ENCODE measurements at regions of chr12 and their contacts with region 1.

Region 1: DNA sequence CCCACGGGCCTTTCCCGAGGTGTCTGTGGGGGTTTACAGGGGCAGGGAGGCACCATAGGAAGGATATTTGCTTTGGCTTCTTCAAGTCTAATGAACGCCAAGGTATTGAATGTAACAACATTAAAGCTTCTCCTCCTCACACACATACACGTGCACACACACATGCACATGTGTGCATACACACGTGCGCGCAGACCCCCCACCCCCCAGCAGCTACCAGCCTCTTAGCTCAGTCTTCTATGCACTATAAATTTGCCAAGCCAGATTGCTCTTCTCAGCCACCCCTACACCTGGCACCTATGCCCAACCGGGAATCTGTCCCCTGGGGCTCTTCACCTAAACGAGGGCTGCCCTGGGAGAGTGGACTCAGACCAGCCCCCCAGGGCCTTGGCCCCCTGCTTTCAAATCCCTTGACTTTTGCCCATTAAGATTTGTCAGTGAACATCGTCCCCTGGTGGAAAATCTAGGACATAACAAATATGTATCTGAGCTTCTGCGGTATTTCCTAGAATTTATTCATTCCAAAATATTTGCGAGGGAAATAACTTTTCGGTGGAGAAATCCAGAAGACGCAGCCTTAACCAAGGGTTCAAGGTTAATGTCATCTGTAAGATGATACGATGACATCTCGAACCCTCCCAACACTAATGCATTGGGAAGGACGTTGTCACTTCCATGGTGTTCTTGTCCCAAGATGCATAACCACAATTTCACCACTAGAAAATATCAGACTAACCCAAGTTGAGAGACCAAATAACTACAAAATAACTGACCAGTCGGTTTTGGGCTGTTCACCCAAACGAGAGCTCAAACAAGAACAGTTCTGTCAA is 330.4 kb downstream of the MED13L start:
- DNase-seq: peak; percentile 8
- ATAC-seq: no peak
- H3K4me3 ChIP-seq: no peak overlapping the region
- H3K27ac ChIP-seq: no peak overlapping the region
- H3K4me1 ChIP-seq: peaks cover 26% of the 10 kb centered on the region
- H3K27me3 ChIP-seq: no peaks in the 10 kb centered on the region
- CTCF ChIP-seq: peak; percentile 74
- EP300 ChIP-seq: no peak
- POLR2A ChIP-seq: no peak
- RAD21 ChIP-seq: peak; percentile 78

Region 2: GRCh38 chr12:115598871-115599811 is 347.9 kb before region 1 on chr12:
- CTCF ChIA-PET with region 1: no interaction called
- POLR2A ChIA-PET with region 1: no interaction called
- in situ Hi-C with region 1: no loop called
- intact Hi-C with region 1: no loop called
- DNase-seq: no peak
- ATAC-seq: no peak
- H3K4me3 ChIP-seq: no peak overlapping the region
- H3K27ac ChIP-seq: no peak overlapping the region
- H3K4me1 ChIP-seq: no peaks in the 10 kb centered on the region
- H3K27me3 ChIP-seq: peaks cover 0 to 18% of the 10 kb centered on the region in 2 experiments; a peak in 4 of 5 replicates
- CTCF ChIP-seq: no peak
- EP300 ChIP-seq: no peak
- POLR2A ChIP-seq: no peak
- RAD21 ChIP-seq: no peak

Region 3: DNA sequence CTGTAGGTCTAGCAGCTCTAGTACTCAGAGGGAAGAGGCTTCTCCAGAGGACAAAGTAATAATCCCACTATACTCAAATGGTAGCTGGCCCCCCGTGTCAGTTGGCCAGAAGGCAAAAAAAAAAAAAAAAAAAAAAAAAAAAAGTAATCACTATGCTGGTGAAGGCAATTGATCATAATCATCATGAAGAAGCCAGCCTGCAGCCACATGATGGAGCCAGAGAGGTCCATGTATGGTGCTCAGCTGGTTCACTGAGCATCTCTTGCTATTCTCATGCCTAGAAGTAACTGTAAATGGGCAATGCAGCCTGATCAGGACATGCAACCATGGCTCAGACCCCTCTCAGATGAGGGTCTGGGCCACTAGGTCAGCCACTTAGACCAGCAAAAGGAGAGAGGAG is 48.4 kb before region 1 on chr12:
- CTCF ChIA-PET with region 1: no interaction called
- POLR2A ChIA-PET with region 1: no interaction called
- in situ Hi-C with region 1: no loop called
- intact Hi-C with region 1: loop called (anchors 1 kb)
- DNase-seq: no peak
- ATAC-seq: peak; percentile 54
- H3K4me3 ChIP-seq: no peak overlapping the region
- H3K27ac ChIP-seq: no peak overlapping the region
- H3K4me1 ChIP-seq: no peaks in the 10 kb centered on the region
- H3K27me3 ChIP-seq: no peaks in the 10 kb centered on the region
- CTCF ChIP-seq: peak; percentile 19; the same call in 1 of the 2 replicates
- EP300 ChIP-seq: no peak
- POLR2A ChIP-seq: no peak
- RAD21 ChIP-seq: no peak

Region 4: DNA sequence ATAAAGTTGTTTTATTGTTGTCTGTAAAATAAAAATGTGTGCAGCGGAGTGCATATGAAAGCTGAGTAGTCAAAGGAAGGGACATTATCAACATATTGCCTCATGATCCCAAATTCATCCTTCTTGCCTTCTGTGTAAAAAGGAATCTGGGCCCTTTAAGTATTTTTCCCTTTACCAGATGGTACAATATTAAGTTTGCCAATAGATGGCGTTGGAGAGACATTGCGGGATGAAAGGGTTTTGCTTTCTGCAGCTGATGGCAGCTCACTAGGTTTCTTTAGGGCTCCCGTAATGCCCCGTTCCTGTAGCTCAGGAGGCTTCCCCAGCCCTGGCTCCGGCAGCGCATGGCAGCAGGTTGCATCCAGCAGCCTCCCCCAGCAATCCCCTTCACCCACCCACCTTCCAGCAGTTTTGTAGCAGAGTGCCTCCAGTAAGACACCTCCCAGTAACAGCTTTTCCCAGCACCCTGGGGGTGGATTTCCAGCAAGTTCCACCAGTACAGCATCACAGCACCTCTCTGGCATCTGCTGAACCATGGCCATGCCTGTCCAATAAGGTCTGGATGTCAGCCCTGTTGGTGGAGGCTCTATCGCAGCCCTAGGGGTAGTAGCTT is 24.0 kb before region 1 on chr12:
- CTCF ChIA-PET with region 1: interaction called, 10 read pairs
- POLR2A ChIA-PET with region 1: interaction called, 4 read pairs
- in situ Hi-C with region 1: no loop called
- intact Hi-C with region 1: loop called (anchors 1 kb)
- DNase-seq: peak; percentile 49
- ATAC-seq: peak; percentile 66
- H3K4me3 ChIP-seq: no peak overlapping the region
- H3K27ac ChIP-seq: no peak overlapping the region
- H3K4me1 ChIP-seq: peaks cover 8% of the 10 kb centered on the region
- H3K27me3 ChIP-seq: peaks cover 0 to 15% of the 10 kb centered on the region in 2 experiments; a peak in 1 of 5 replicates
- CTCF ChIP-seq: peak; percentile 80
- EP300 ChIP-seq: no peak
- POLR2A ChIP-seq: no peak
- RAD21 ChIP-seq: peak; percentile 57; the same call in 1 of the 2 replicates

Region 5: DNA sequence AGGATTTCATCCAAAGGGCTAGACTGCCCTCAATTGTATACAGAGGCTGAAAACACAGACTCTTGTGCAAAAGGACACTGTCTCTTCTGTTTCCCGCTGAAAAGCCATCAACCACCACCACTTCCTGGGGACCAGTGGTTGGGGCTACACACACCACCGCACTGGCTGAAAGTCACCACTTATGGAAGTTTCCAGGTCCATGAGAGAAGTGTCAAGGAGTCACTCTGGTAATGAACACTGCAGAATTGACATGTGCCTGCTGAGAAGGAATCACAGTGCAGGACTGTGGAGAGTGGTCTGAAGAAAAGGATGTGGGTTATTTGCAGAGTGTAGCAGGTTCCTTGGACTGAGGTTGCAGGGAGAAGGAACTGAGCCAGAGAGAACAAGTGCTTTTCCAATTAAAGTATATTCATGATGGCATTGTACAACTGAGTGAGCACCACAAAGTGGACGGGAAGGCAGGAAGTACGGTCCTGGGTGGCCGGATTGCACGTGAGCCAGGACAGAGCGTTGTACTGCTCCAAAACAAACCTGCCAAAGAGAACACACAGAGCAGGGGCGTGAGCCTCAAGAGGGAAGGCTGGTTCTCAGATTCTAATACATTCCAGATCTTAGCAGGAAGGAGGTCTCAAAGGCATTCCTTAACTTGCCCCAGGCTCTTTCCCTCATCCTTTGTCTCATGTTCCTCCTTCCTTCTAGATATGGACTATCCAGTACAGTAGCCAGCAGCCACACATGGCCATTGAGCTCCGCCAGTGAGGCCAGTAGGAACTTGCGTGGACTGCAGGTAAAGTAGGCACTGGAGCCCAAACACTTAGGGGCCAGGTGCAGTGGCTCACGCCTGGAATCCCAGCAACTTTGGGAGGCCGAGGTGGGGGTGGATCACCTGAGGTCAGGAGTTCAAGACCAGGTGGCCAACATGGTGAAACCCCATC is 14.1 kb after region 1 on chr12:
- CTCF ChIA-PET with region 1: no interaction called
- POLR2A ChIA-PET with region 1: no interaction called
- in situ Hi-C with region 1: no loop called
- intact Hi-C with region 1: no loop called
- DNase-seq: no peak
- ATAC-seq: no peak
- H3K4me3 ChIP-seq: no peak overlapping the region
- H3K27ac ChIP-seq: no peak overlapping the region
- H3K4me1 ChIP-seq: no peaks in the 10 kb centered on the region
- H3K27me3 ChIP-seq: no peaks in the 10 kb centered on the region
- CTCF ChIP-seq: no peak
- EP300 ChIP-seq: no peak
- POLR2A ChIP-seq: no peak
- RAD21 ChIP-seq: no peak